Pancreas (tissue), 10 donors: ENCODE measurements at regions of chr10 and their contacts with region 1.

Region 1: DNA sequence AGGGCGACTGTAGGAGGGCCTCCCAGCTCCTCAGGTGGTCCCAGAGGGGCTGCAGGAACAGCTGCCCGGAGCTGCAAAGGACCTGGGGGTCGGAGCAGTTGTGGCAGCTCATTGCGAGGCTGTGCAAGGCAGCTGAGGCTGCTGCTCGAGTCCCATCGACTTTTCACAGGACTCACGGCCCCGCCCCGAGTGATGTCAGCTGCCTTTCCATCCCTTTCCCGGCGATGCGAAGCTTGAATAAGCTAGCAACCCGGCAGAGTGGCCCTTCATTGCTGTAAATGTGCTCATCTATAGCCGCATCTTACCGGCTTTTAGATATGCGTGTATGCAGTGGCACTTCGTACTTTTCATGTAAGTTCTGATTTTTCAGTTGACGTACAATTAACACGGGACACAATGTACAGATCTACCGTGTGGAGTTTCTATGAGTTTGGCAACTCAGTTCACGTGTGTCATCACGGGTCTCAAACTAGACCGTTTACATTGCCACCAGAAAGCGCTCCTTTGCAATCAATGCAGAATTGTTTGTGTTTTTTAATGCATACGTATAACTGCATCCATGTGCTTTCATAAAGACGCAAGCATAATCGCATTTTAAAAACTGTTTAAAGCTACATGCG is at the start of gene CH25H:
- DNase-seq: peak; percentile 34 to 75 (median 64)
- ATAC-seq: peak; percentile 71 to 90 (median 87)
- H3K4me3 ChIP-seq: peak within 1 kb of the TSS; percentile 8 to 47 (median 26)
- H3K27ac ChIP-seq: peak within 1 kb of the TSS in 3 of 4 donors; percentile 0 to 46 (median 8)
- H3K4me1 ChIP-seq: peaks cover 0 to 7% (median 6%) of the 10 kb centered on the region in 3 donors
- H3K27me3 ChIP-seq: peaks cover 0 to 29% (median 3%) of the 10 kb centered on the region in 4 donors
- CTCF ChIP-seq: no peak
- total RNA-seq, gene CH25H: 0.32 to 1.9 (median 0.46) TPM in 5 of 6 donors, not detected in the other

Region 2: DNA sequence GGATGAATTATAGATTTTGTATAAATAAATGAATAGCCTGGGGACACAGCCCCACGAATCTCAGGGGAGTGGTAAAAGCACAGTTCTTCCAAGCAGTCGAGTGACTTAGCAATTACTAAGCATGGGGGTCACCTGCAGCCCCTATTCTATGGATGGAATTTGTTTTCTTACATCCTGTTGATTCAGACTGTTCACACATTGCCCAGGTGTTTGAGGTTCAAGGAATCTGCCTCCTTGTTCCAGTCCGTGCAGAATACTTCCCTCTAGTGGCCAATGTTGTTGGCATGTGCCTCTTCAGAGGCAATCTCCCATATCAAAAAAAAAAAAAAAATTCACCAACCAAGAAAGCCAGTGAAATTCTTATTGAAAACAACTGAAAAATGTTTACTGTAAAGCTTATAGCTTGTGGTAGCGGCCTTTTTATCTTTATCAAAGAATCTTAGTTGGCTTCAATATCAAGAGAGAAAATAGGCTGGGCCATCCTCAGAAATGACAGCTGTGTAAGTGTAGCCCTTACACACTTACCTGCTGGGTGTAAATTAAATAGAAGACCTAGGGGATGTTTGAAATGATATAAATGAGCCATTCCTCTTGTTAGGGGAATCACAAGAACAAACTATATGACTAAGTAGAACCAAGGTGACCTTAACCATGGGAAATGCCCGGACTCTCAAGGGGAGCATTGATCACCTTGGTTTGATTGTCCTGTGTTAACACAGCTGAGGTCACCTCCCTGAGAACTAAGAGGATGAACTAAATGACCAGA is 396.9 kb before region 1 on chr10:
- intact Hi-C with region 1: no loop called
- DNase-seq: peak in 3 of 6 donors; percentile 16 to 49 (median 27)
- ATAC-seq: peak; percentile 81 to 92 (median 90)
- H3K4me3 ChIP-seq: no peak overlapping the region
- H3K27ac ChIP-seq: no peak overlapping the region
- H3K4me1 ChIP-seq: no peaks in the 10 kb centered on the region
- H3K27me3 ChIP-seq: no peaks in the 10 kb centered on the region
- CTCF ChIP-seq: peak; percentile 49 to 66 (median 50)

Region 3: DNA sequence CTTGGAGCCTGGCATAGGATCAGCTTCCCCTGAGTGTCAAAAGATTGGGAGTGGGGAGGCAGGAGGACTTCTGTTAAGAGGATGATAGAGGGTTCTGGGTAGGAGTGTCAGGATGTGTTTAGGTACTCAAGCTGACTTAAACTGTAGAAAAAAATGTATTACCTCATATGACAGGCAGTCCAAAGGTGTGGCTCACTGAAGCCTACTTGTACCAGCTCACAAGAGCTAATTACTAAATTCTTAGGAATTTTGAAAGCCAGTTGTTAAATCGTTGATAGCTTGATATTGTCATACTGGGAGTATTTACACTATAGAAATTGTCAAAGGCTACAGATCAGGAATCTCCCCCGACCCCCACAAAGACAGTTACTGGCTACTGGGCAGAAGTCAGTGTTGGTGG is 184.6 kb before region 1 on chr10:
- intact Hi-C with region 1: loop called in 1 of 3 experiments (anchors 5 kb)
- DNase-seq: no peak
- ATAC-seq: no peak
- H3K4me3 ChIP-seq: no peak overlapping the region
- H3K27ac ChIP-seq: no peak overlapping the region
- H3K4me1 ChIP-seq: no peaks in the 10 kb centered on the region
- H3K27me3 ChIP-seq: no peaks in the 10 kb centered on the region
- CTCF ChIP-seq: no peak

Region 4: GRCh38 chr10:89450901-89451300 is 243.6 kb after region 1 on chr10:
- intact Hi-C with region 1: no loop called
- DNase-seq: no peak
- ATAC-seq: peak in 1 of 4 donors; percentile 22
- H3K4me3 ChIP-seq: no peak overlapping the region
- H3K27ac ChIP-seq: no peak overlapping the region
- H3K4me1 ChIP-seq: peaks cover 0 to 4% (median 0%) of the 10 kb centered on the region in 3 donors
- H3K27me3 ChIP-seq: no peaks in the 10 kb centered on the region
- CTCF ChIP-seq: no peak